ENCODE measurements at regions of chr12 and their contacts with region 1.

Region 1: GRCh38 chr12:108731105-108731865 is at the start of gene CORO1C:
- H3K4me3 ChIP-seq: peak within 1 kb of the TSS; percentile 65
- H3K27ac ChIP-seq: peak within 1 kb of the TSS; percentile 89
- H3K4me1 ChIP-seq: peaks cover 22% of the 10 kb centered on the region
- CTCF ChIP-seq: peak; percentile 93

Region 2: DNA sequence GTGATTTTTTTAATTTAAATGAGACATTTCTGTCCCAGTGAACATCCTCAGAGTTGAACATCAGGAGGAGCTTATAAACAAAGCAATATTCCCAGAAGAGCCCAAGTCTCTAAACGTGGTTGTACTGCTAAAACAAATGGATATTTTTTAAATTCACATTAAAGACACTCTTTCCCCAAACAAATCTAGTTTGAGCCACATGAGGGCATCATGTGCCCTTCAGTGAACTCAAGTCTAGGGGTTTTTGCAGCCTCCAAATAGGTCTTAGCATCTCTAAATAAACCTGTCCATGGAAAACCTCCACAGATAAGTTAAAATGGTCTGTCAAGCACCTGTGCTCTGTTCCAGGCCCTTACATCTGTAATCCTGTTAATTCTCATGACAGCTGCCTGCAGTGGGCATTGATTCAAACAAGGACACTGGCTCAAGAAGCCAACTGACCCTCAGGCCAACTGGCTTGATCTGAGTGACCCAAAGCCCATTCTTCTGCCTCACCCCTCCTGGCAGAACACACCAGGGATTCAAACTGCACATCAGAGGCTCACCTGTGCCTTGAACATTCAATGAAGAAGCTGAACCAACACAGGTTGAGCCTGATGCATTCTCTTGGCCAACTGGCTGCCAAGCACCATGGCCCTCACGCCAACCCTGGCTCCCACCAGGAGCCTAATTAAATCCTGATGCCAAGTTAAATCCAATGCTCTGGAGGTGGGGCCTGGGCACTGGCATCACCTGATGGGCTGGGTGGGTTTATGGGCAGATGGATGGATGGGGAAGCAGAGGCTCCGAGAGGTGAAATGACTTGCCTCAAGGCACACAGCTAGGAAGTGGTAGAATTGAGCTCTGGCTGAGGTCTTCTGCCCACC is 160.3 kb before region 1 on chr12:
- CTCF ChIA-PET with region 1: no interaction called
- POLR2A ChIA-PET with region 1: no interaction called
- H3K4me3 ChIP-seq: no peak overlapping the region
- H3K27ac ChIP-seq: no peak overlapping the region
- H3K4me1 ChIP-seq: no peaks in the 10 kb centered on the region
- CTCF ChIP-seq: no peak

Region 3: GRCh38 chr12:108691175-108691997 is 39.9 kb before region 1 on chr12:
- CTCF ChIA-PET with region 1: interaction called, 5 read pairs
- POLR2A ChIA-PET with region 1: interaction called, 20 read pairs
- H3K4me3 ChIP-seq: peak overlapping the region; percentile 12; the same call in 1 of the 2 replicates
- H3K27ac ChIP-seq: peak overlapping the region; percentile 78
- H3K4me1 ChIP-seq: peaks cover 30% of the 10 kb centered on the region
- CTCF ChIP-seq: peak; percentile 50; the same call in 1 of the 2 replicates

Region 4: GRCh38 chr12:108701779-108702441 is 29.4 kb before region 1 on chr12:
- CTCF ChIA-PET with region 1: interaction called, 6 read pairs
- POLR2A ChIA-PET with region 1: interaction called, 17 read pairs
- H3K4me3 ChIP-seq: no peak overlapping the region
- H3K27ac ChIP-seq: peak overlapping the region; percentile 29; the same call in 1 of the 2 replicates
- H3K4me1 ChIP-seq: peaks cover 14% of the 10 kb centered on the region
- CTCF ChIP-seq: no peak

Region 5: GRCh38 chr12:108717243-108717642 is 14.0 kb before region 1 on chr12:
- CTCF ChIA-PET with region 1: interaction called, 4 read pairs
- POLR2A ChIA-PET with region 1: interaction called, 10 read pairs
- H3K4me3 ChIP-seq: no peak overlapping the region
- H3K27ac ChIP-seq: no peak overlapping the region
- H3K4me1 ChIP-seq: peaks cover 20% of the 10 kb centered on the region
- CTCF ChIP-seq: no peak

Measured in HEK293 (cell line).